PC-3 (cell line): ENCODE measurements at regions of chr5 and their contacts with region 1.

Region 1: GRCh38 chr5:131263648-131264450 is at the start of gene CDC42SE2:
- DNase-seq: peak; percentile 85
- ATAC-seq: peak; percentile 91
- H3K4me3 ChIP-seq: peak within 1 kb of the TSS; percentile 95
- H3K27ac ChIP-seq: peak within 1 kb of the TSS; percentile 46
- H3K4me1 ChIP-seq: peaks cover 21% of the 10 kb centered on the region
- H3K27me3 ChIP-seq: no peaks in the 10 kb centered on the region
- CTCF ChIP-seq: no peak
- total RNA-seq, gene CDC42SE2: 10.5 and 13.3 TPM in 2 replicates

Region 2: GRCh38 chr5:131165119-131165727 is 98.6 kb before region 1 on chr5 and contains the start of gene HINT1:
- CTCF ChIA-PET with region 1: interaction called, 9 read pairs
- POLR2A ChIA-PET with region 1: no interaction called
- intact Hi-C with region 1: loop called (anchors 1 kb)
- DNase-seq: peak; percentile 92
- ATAC-seq: peak; percentile 90
- H3K4me3 ChIP-seq: peak within 1 kb of the TSS; percentile 98
- H3K27ac ChIP-seq: peak within 1 kb of the TSS; percentile 65
- H3K4me1 ChIP-seq: peaks cover 16% of the 10 kb centered on the region; the same call in 1 of the 2 replicates
- H3K27me3 ChIP-seq: no peaks in the 10 kb centered on the region
- CTCF ChIP-seq: 0 out of 2 replicates have a peak, but pooled peaks have one; percentile 22
- total RNA-seq, gene HINT1: 214 and 243 TPM in 2 replicates

Region 3: GRCh38 chr5:131170540-131171275 is 93.1 kb before region 1 on chr5 and contains the start of gene LYRM7:
- CTCF ChIA-PET with region 1: interaction called, 9 read pairs
- POLR2A ChIA-PET with region 1: no interaction called
- intact Hi-C with region 1: loop called (anchors 1 kb)
- DNase-seq: peak; percentile 98
- ATAC-seq: peak; percentile 97
- H3K4me3 ChIP-seq: peak within 1 kb of the TSS; percentile 95
- H3K27ac ChIP-seq: 0 out of 2 replicates have a peak within 1 kb of the TSS, but pooled peaks have one; percentile 17
- H3K4me1 ChIP-seq: 0 out of 2 replicates have a peak, but pooled peaks cover 10% of the 10 kb centered on the region
- H3K27me3 ChIP-seq: no peaks in the 10 kb centered on the region
- CTCF ChIP-seq: no peak
- total RNA-seq, gene LYRM7: 5.0 and 6.7 TPM in 2 replicates

Region 4: GRCh38 chr5:131277875-131278740 is 14.3 kb after region 1 on chr5:
- CTCF ChIA-PET with region 1: no interaction called
- POLR2A ChIA-PET with region 1: no interaction called
- intact Hi-C with region 1: loop called (anchors 2 kb)
- DNase-seq: no peak
- ATAC-seq: no peak
- H3K4me3 ChIP-seq: no peak overlapping the region
- H3K27ac ChIP-seq: no peak overlapping the region
- H3K4me1 ChIP-seq: peaks cover 22% of the 10 kb centered on the region
- H3K27me3 ChIP-seq: no peaks in the 10 kb centered on the region
- CTCF ChIP-seq: no peak

Region 5: GRCh38 chr5:131328536-131329285 is 64.9 kb after region 1 on chr5:
- CTCF ChIA-PET with region 1: no interaction called
- POLR2A ChIA-PET with region 1: no interaction called
- intact Hi-C with region 1: loop called (anchors 5 kb)
- DNase-seq: peak; percentile 84
- ATAC-seq: peak; percentile 99
- H3K4me3 ChIP-seq: no peak overlapping the region
- H3K27ac ChIP-seq: peak overlapping the region; percentile 28; the same call in 1 of the 2 replicates
- H3K4me1 ChIP-seq: peaks cover 17% of the 10 kb centered on the region
- H3K27me3 ChIP-seq: no peaks in the 10 kb centered on the region
- CTCF ChIP-seq: no peak

Region 6: DNA sequence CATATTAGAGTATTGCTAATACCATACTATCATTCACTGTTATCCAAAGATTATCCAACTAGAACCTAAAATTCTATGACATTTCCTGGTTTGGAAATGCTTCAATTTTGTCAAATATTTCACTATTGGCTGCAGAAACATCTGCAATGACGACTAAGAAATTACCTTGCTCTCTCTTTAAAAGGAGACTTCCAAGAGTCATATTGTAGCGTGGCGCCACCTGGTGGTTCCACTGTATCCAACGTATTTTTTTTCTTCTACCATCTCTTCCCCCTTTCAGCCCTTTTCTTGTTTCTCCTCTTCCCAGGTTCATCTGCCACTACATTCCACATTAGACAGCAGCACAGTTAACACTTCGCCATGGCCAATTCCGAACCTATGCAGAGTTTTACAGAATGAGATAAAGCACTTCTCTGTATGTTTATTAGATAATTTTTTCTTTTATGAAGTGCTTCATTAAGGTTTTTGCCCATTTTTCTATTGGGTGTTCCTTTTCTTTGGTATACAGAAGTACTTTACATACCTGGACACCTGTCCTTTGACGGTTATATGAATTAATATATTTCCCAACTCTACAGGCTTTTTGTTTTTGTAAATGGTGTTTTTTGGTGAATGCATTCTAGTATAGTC is 153.5 kb after region 1 on chr5:
- CTCF ChIA-PET with region 1: no interaction called
- POLR2A ChIA-PET with region 1: no interaction called
- intact Hi-C with region 1: loop called (anchors 5 kb)
- DNase-seq: peak; percentile 73
- ATAC-seq: peak; percentile 40
- H3K4me3 ChIP-seq: no peak overlapping the region
- H3K27ac ChIP-seq: no peak overlapping the region
- H3K4me1 ChIP-seq: no peaks in the 10 kb centered on the region
- H3K27me3 ChIP-seq: no peaks in the 10 kb centered on the region
- CTCF ChIP-seq: peak; percentile 81